Stomach (tissue), 19 donors: ENCODE measurements at regions of chr1 and their contacts with region 1.

Region 1: GRCh38 chr1:20528221-20528620 is 20.3 kb upstream of the MUL1 start:
- DNase-seq: no peak
- H3K4me3 ChIP-seq: no peak overlapping the region
- H3K27ac ChIP-seq: no peak overlapping the region
- H3K4me1 ChIP-seq: no peaks in the 10 kb centered on the region
- H3K27me3 ChIP-seq: peaks cover 0 to 62% (median 24%) of the 10 kb centered on the region in 3 donors
- CTCF ChIP-seq: no peak
- EP300 ChIP-seq: no peak
- POLR2A ChIP-seq: no peak

Region 2: GRCh38 chr1:20633190-20634064 is 105.2 kb after region 1 on chr1 and contains the start of gene PINK1:
- intact Hi-C with region 1: loop called (anchors 5 kb)
- DNase-seq: peak; percentile 84 to 93
- H3K4me3 ChIP-seq: peak within 1 kb of the TSS; percentile 86 to 99 (median 98)
- H3K27ac ChIP-seq: peak within 1 kb of the TSS; percentile 91 to 95 (median 94)
- H3K4me1 ChIP-seq: peaks cover 19 to 38% (median 33%) of the 10 kb centered on the region in 4 donors
- H3K27me3 ChIP-seq: peaks cover 0 to 3% (median 0%) of the 10 kb centered on the region in 3 donors
- CTCF ChIP-seq: peak in 5 of 7 experiments; percentile 85 to 100 (median 98)
- EP300 ChIP-seq: no peak
- POLR2A ChIP-seq: no peak
- total RNA-seq, gene PINK1: 21.0 to 169 (median 42.4) TPM